Dorsolateral prefrontal cortex (tissue), 120 donors: ENCODE measurements at regions of chr7 and their contacts with region 1.

Region 1: DNA sequence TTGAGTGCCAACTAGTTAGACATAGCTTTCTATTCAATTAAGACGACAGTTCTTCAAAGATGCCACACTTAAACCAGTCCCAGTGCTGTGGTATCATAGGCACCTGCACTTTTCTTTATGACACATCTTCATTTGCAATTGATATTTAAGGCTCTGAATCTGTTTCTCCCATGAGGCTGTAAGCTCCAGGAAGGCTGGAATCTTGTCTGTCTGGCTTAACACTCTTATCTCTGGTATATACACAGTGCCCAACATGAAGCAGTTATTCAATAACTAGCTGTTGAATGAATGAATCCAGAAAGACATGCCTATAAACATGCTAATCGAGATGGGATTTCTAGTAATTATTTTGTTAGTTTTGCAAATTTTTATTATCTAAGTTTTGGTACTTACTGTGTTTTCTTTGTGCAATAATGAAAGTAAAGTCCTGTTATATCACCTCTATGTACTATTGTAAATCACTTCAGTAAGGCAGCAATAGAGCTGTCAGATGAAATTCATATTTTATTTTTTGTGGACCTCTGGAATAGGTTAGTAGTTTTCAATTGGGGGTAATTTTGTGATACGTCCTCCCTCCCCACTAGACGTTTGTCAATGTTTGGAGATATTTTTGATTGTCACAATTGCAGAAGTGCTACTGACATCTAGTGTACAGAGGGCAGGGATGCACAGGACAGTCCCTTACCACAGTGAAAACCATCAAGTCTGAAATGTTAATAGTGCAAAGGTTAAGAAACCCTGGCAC is 51.3 kb upstream of the STEAP4 start:
- DNase-seq: no peak
- H3K4me3 ChIP-seq: peak overlapping the region in 24 of 59 donors; percentile 10 to 45 (median 28)
- H3K27ac ChIP-seq: no peak overlapping the region
- H3K27me3 ChIP-seq: no peaks in the 10 kb centered on the region
- CTCF ChIP-seq: peak in 50 of 56 donors; percentile 7 to 64 (median 38)

Region 2: GRCh38 chr7:87739306-87739705 is 618.6 kb before region 1 on chr7:
- intact Hi-C with region 1: no loop called
- DNase-seq: no peak
- H3K4me3 ChIP-seq: no peak overlapping the region
- H3K27ac ChIP-seq: no peak overlapping the region
- H3K27me3 ChIP-seq: no peaks in the 10 kb centered on the region
- CTCF ChIP-seq: no peak

Region 3: DNA sequence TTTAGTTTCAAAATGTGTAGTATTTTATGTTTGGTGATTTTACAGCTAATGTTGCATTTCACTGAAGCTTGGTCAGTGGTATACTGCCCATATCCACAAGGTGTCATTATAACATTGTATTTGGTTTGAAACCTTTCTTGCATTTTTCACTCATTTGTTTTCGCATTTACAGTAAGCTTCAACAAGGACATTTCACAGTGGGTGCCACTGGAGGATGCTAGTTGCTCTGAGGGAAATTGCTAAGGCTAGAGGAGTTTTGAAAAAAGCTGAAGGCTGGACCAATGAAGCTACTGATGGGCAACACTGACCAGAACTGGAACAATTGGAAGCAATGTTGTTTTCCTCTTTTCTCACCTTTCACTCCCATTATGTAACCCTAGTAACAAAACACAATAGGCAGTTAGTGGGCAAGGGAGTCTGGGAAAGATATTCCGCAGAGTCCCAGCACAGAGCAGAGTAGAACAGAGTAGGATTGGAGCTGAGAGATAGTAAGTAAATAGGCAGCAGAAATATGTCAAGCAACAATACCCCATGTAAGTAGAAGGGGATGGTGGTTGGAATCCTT is 114.5 kb before region 1 on chr7:
- intact Hi-C with region 1: loop called in 1 of 2 experiments (anchors 10 kb)
- DNase-seq: peak in 2 of 10 donors; percentile 19 to 40
- H3K4me3 ChIP-seq: peak overlapping the region in 6 of 59 donors; percentile 1 to 23 (median 16)
- H3K27ac ChIP-seq: no peak overlapping the region
- H3K27me3 ChIP-seq: no peaks in the 10 kb centered on the region
- CTCF ChIP-seq: peak; percentile 61 to 90 (median 78)